PC-9 (cell line): ENCODE measurements at regions of chr7 and their contacts with region 1.

Region 1: GRCh38 chr7:101017064-101017777 is 2.7 kb upstream of the MUC17 start:
- DNase-seq: peak; percentile 58 to 79
- H3K4me3 ChIP-seq: 0 out of 2 replicates have a peak overlapping the region, but pooled peaks have one; percentile 21
- H3K27ac ChIP-seq: no peak overlapping the region
- H3K4me1 ChIP-seq: peaks cover 7% of the 10 kb centered on the region
- H3K27me3 ChIP-seq: peaks cover 35% of the 10 kb centered on the region
- CTCF ChIP-seq: no peak

Region 2: DNA sequence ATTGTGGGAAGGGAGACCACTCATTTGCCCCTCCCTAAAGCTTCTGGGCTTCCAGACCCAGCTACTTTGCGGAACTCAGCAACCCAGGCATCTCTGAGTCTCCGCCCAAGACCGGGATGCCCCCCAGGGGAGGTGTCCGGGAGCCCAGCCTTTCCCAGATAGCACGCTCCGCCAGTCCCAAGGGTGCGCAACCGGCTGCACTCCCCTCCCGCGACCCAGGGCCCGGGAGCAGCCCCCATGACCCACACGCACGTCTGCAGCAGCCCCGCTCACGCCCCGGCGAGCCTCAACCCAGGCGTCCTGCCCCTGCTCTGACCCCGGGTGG is 296.9 kb before region 1 on chr7 and contains the start of gene EPO:
- CTCF ChIA-PET with region 1: no interaction called
- POLR2A ChIA-PET with region 1: no interaction called
- intact Hi-C with region 1: no loop called
- DNase-seq: no peak
- H3K4me3 ChIP-seq: no peak within 1 kb of the TSS
- H3K27ac ChIP-seq: no peak within 1 kb of the TSS
- H3K4me1 ChIP-seq: peaks cover 14% of the 10 kb centered on the region; the same call in 1 of the 2 replicates
- H3K27me3 ChIP-seq: no peaks in the 10 kb centered on the region
- CTCF ChIP-seq: no peak
- total RNA-seq, gene EPO: 0.30 and 0.44 TPM in 2 replicates

Region 3: GRCh38 chr7:101058355-101058754 is 41.1 kb after region 1 on chr7:
- CTCF ChIA-PET with region 1: no interaction called
- POLR2A ChIA-PET with region 1: no interaction called
- intact Hi-C with region 1: no loop called
- DNase-seq: peak in 1 of 2 experiments; percentile 58
- H3K4me3 ChIP-seq: no peak overlapping the region
- H3K27ac ChIP-seq: no peak overlapping the region
- H3K4me1 ChIP-seq: no peaks in the 10 kb centered on the region
- H3K27me3 ChIP-seq: peaks cover 61% of the 10 kb centered on the region
- CTCF ChIP-seq: no peak

Region 4: GRCh38 chr7:101077303-101078089 is 60.3 kb after region 1 on chr7:
- CTCF ChIA-PET with region 1: interaction called, 20 read pairs
- POLR2A ChIA-PET with region 1: no interaction called
- intact Hi-C with region 1: no loop called
- DNase-seq: peak; percentile 86 to 96
- H3K4me3 ChIP-seq: no peak overlapping the region
- H3K27ac ChIP-seq: no peak overlapping the region
- H3K4me1 ChIP-seq: peaks cover 25% of the 10 kb centered on the region
- H3K27me3 ChIP-seq: no peaks in the 10 kb centered on the region
- CTCF ChIP-seq: peak; percentile 92

Region 5: DNA sequence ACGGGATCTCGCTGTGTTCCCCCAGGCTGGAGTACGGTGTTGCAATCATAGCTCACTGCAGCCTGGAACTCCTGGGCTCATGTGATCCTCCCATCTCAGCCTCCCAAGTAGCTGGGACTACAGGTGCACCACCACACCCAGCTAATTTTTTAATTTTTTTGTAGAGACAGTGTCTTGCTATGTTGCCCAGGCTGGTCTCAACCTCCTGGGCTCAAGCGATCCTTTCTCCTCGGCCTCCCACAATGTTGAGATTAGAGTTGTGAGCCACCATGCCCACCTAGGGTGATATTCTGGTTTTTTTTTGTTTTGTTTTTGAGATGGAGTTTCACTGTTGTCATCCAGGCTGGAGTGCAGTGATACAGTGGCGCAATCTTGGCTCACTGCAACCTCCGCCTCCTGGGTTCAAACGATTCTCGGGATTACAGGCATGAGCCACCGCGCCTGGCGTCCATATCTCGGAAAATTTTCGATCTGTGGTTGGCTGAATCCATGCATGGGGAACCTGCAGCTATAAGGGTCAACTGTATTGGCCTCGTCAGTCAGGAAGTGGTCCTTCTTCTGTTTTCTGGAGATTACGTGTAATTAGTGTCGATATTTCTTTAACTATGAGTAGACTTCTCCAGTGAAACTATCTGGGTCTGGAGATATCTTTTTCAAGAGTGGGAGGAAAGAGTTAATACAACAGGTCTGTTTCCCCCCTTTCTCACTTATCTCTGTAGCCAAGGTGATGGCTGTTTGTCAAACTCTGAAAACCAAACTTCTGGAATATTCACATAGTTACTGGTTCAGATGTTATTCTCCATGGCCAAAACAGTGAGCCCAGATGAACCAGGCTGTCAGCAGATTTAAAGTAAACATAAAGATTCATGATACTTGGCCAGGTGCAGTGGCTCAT is 248.6 kb after region 1 on chr7:
- CTCF ChIA-PET with region 1: no interaction called
- POLR2A ChIA-PET with region 1: interaction called, 10 read pairs
- intact Hi-C with region 1: no loop called
- DNase-seq: no peak
- H3K4me3 ChIP-seq: no peak overlapping the region
- H3K27ac ChIP-seq: no peak overlapping the region
- H3K4me1 ChIP-seq: no peaks in the 10 kb centered on the region
- H3K27me3 ChIP-seq: 0 out of 2 replicates have a peak, but pooled peaks cover 3% of the 10 kb centered on the region
- CTCF ChIP-seq: no peak

Region 6: DNA sequence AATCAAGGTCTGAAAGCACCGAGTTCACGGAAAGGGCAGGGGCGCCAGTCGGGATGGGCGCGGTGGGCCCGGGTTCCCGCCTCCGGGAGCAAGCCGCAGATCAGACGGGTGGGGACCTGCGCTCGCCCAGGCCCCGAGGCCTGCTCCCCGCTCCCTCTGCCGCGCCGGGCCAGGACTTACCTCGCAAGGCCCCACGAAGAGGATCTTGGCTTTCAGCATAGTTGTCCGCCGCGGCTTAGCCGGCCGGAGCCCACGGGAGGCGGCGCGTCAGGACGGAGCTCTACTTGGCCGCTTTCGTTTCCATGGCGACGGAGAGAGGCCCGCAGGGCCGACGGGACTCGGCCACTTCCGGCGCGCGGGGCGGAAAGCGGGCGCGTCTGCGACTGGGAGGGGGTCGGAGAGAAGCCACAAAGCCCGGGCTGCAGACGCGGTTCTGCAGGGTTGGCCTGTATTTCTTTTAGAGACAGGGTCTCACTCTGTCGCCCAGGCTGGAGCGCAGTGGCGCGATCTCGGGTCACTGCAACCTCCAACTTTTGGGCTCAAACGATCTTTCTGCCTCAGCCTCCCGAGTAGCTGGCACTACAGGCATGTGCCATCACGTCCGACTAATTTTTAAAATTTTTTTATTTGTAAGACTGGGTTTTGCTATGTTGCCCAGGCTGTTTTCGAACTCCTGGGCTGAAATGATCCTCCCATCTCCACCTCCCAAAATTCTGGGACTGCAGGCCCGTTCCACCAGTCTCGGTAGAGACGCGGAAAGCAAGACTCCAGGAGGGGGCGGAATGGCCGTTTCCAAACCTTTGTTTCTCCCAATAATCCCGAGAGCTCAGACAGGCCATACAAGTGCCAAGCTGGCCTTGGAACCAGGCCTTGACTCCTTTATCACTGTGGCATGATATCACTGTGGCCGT is 304.5 kb after region 1 on chr7 and contains the start of gene IFT22:
- CTCF ChIA-PET with region 1: no interaction called
- POLR2A ChIA-PET with region 1: no interaction called
- intact Hi-C with region 1: no loop called
- DNase-seq: peak; percentile 76 to 89
- H3K4me3 ChIP-seq: peak within 1 kb of the TSS; percentile 85
- H3K27ac ChIP-seq: no peak within 1 kb of the TSS; the same call in 1 of the 2 replicates
- H3K4me1 ChIP-seq: peaks cover 5% of the 10 kb centered on the region; the same call in 1 of the 2 replicates
- H3K27me3 ChIP-seq: peaks cover 10% of the 10 kb centered on the region; the same call in 1 of the 2 replicates
- CTCF ChIP-seq: no peak; the same call in 1 of the 2 replicates
- total RNA-seq, gene IFT22: 47.6 and 53.0 TPM in 2 replicates